Activated CD4-positive, alpha-beta T cell treated with anti-CD3 and anti-CD28 coated beads for 36 hours (primary cell): ENCODE measurements at regions of chr18 and their contacts with region 1.

Region 1: DNA sequence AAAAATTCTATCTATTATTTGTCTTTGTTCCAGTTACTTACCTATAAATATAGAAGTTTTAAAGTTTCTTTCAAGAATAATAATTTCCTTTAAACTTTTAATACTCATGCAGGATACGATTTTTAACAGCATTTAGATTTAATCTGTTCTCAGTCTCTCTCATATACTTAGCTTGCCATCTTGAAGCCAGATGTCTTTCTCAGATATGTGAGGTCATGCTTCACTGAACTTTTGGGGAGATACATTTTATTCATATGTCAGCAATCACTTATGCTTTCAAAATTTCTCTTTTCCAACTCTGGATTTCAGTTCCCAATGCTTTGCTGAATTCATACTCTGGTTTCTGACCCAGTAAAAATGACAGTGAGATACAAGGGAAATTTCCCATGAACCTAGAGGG is 66.5 kb upstream of the CCDC178 start:
- DNase-seq: no peak
- ATAC-seq: no peak
- H3K4me3 Mint-ChIP-seq: no peak overlapping the region
- H3K27ac Mint-ChIP-seq: no peak overlapping the region
- H3K4me1 Mint-ChIP-seq: no peaks in the 10 kb centered on the region
- H3K27me3 Mint-ChIP-seq: no peaks in the 10 kb centered on the region

Region 2: GRCh38 chr18:33440060-33441043 is 66.7 kb before region 1 on chr18 and contains the start of gene CCDC178:
- CTCF ChIA-PET with region 1: no interaction called
- POLR2A ChIA-PET with region 1: no interaction called
- intact Hi-C with region 1: loop called in 1 of 2 experiments (anchors 10 kb)
- DNase-seq: peak; percentile 8
- ATAC-seq: no peak
- H3K4me3 Mint-ChIP-seq: no peak within 1 kb of the TSS
- H3K27ac Mint-ChIP-seq: no peak within 1 kb of the TSS
- H3K4me1 Mint-ChIP-seq: no peaks in the 10 kb centered on the region
- H3K27me3 Mint-ChIP-seq: peaks cover 26% of the 10 kb centered on the region
- total RNA-seq, gene CCDC178: not detected

Region 3: DNA sequence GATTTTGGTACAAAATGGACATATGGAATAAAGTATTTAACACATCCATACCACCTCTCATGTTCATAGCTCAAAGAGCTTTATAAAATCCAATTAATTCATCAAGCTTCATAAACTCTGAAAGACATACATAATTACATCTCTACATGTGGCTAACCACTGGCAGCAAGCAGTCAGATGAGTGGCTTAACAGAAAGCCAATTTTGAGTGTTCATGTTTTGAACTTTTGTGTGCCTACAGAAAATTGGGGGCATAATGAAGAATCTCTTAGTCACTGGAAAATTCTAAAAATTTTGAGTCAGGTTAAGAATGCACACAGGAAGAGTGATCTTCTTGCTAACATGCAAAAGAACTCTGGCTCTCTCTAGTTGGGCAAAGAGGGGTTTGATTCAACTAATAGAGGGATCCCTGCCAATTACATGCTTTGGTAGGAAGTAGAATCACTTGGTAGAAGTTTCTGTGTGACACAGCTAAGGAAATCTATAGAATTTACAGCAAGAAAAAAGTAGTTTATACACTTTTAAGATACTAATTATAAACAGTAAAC is 430.3 kb after region 1 on chr18:
- CTCF ChIA-PET with region 1: no interaction called
- POLR2A ChIA-PET with region 1: no interaction called
- intact Hi-C with region 1: no loop called
- DNase-seq: no peak
- ATAC-seq: no peak
- H3K4me3 Mint-ChIP-seq: no peak overlapping the region
- H3K27ac Mint-ChIP-seq: no peak overlapping the region
- H3K4me1 Mint-ChIP-seq: no peaks in the 10 kb centered on the region
- H3K27me3 Mint-ChIP-seq: no peaks in the 10 kb centered on the region